B cell (primary cell): ENCODE measurements at regions of chr7 and their contacts with region 1.

Region 1: GRCh38 chr7:99040104-99040958 is 103.6 kb downstream of the SMURF1 start:
- DNase-seq: peak; percentile 74
- ATAC-seq: peak; percentile 53
- H3K4me3 ChIP-seq: no peak overlapping the region
- H3K4me3 Mint-ChIP-seq: no peak overlapping the region
- H3K27ac ChIP-seq: no peak overlapping the region
- H3K27ac Mint-ChIP-seq: no peak overlapping the region
- H3K4me1 ChIP-seq: no peaks in the 10 kb centered on the region
- H3K4me1 Mint-ChIP-seq: no peaks in the 10 kb centered on the region
- H3K27me3 ChIP-seq: no peaks in the 10 kb centered on the region
- H3K27me3 Mint-ChIP-seq: no peaks in the 10 kb centered on the region
- CTCF ChIP-seq: peak; percentile 73

Region 2: GRCh38 chr7:99155213-99155612 is 114.9 kb after region 1 on chr7:
- CTCF ChIA-PET with region 1: no interaction called
- POLR2A ChIA-PET with region 1: no interaction called
- intact Hi-C with region 1: no loop called
- DNase-seq: no peak
- ATAC-seq: no peak
- H3K4me3 ChIP-seq: no peak overlapping the region
- H3K4me3 Mint-ChIP-seq: no peak overlapping the region
- H3K27ac ChIP-seq: no peak overlapping the region
- H3K27ac Mint-ChIP-seq: no peak overlapping the region
- H3K4me1 ChIP-seq: no peaks in the 10 kb centered on the region
- H3K4me1 Mint-ChIP-seq: peaks cover 6% of the 10 kb centered on the region
- H3K27me3 ChIP-seq: no peaks in the 10 kb centered on the region
- H3K27me3 Mint-ChIP-seq: peaks cover 18% of the 10 kb centered on the region
- CTCF ChIP-seq: no peak

Region 3: GRCh38 chr7:99312316-99313203 is 272.2 kb after region 1 on chr7:
- CTCF ChIA-PET with region 1: interaction called, 113 read pairs
- POLR2A ChIA-PET with region 1: no interaction called
- intact Hi-C with region 1: no loop called
- DNase-seq: peak; percentile 77
- ATAC-seq: peak; percentile 68
- H3K4me3 ChIP-seq: peak overlapping the region in 2 of 5 experiments; percentile 39 to 40
- H3K4me3 Mint-ChIP-seq: peak overlapping the region; percentile 14
- H3K27ac ChIP-seq: no peak overlapping the region
- H3K27ac Mint-ChIP-seq: no peak overlapping the region
- H3K4me1 ChIP-seq: peaks cover 0 to 8% of the 10 kb centered on the region in 2 donors
- H3K4me1 Mint-ChIP-seq: peaks cover 4% of the 10 kb centered on the region
- H3K27me3 ChIP-seq: peaks cover 0 to 3% (median 0%) of the 10 kb centered on the region in 4 experiments
- H3K27me3 Mint-ChIP-seq: peaks cover 3% of the 10 kb centered on the region
- CTCF ChIP-seq: peak; percentile 91